Posterior vena cava (tissue), 2 donors: ENCODE measurements at regions of chr9 and their contacts with region 1.

Region 1: GRCh38 chr9:16705121-16705604 is 165.3 kb downstream of the BNC2 start:
- DNase-seq: peak; percentile 96

Region 2: DNA sequence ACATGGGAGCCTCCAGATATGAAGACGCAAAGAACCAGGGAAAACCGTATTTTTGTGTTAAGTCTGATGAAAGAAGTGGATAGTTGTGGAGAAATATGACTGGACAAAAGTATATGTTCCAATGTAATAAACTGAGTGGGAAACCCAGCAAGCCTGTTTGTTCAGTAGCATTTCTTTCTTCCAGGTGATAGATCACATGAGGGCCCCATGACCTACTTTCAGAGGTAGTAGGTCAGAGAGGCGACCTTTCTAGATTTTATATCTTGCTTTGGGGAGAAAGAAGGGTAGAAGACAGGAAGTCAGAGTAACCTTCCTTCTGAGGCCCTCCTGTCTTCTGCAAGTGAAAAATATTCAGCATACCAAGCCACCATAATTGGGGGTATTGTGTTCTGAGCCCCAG is 1120.8 kb before region 1 on chr9:
- intact Hi-C with region 1: no loop called
- DNase-seq: no peak

Region 3: GRCh38 chr9:15999422-16000339 is 705.5 kb before region 1 on chr9:
- intact Hi-C with region 1: no loop called
- DNase-seq: no peak

Region 4: GRCh38 chr9:16551692-16552091 is 153.5 kb before region 1 on chr9:
- intact Hi-C with region 1: no loop called
- DNase-seq: no peak

Region 5: DNA sequence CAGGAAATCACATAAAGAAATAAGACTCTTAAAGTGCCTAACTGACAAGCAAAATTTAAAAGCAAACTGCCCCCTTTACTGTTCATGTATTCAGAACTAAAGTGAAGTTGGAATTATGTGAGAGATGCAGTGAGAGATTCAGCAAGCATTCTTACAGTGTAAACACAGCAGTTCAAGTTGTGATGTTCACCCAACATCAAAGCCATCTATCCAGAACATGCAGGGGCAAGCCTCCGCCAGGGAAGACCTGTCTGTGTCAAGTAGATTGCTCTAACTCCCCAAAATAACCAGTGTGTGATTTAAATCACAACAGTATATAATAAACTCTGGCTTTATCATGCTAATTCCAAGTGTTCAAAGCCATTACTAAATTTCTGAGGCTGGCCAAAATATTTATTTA is 67.9 kb before region 1 on chr9:
- intact Hi-C with region 1: loop called in 1 of 2 experiments (anchors 10 kb)
- DNase-seq: no peak